Activated CD4-positive, alpha-beta memory T cell treated with anti-CD3 and anti-CD28 coated beads for 36 hours (primary cell): ENCODE measurements at regions of chr5 and their contacts with region 1.

Region 1: DNA sequence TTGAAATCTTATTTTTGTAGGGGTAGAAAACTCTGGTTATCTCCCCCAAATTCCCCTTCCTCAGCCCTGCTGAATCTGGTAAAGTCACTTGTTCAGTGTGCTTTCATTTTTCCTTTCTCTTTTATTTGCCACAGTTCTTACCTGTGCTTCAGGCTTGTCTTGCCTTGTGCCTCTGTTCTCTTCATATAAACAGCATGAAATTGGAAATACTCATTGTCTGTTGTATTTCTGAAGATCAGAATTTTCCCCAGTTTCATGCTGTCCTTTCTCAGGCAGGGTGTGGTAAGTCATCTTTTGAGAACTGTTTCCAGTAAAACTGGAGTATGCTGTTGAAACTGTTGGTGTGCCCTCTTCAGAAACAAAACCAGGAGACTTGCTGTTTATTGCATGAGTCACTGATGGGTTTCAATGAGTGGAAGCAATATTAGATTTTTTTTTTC is 7.0 kb downstream of the PAM start:
- DNase-seq: no peak
- H3K4me3 Mint-ChIP-seq: peak overlapping the region; percentile 51
- H3K27ac Mint-ChIP-seq: peak overlapping the region; percentile 75
- H3K4me1 Mint-ChIP-seq: peaks cover 76% of the 10 kb centered on the region
- H3K27me3 Mint-ChIP-seq: no peaks in the 10 kb centered on the region

Region 2: GRCh38 chr5:102747386-102748166 is 14.5 kb before region 1 on chr5:
- CTCF ChIA-PET with region 1: interaction called, 4 read pairs
- POLR2A ChIA-PET with region 1: interaction called, 4 read pairs
- intact Hi-C with region 1: loop called (anchors 1 kb)
- DNase-seq: no peak
- H3K4me3 Mint-ChIP-seq: no peak overlapping the region
- H3K27ac Mint-ChIP-seq: no peak overlapping the region
- H3K4me1 Mint-ChIP-seq: peaks cover 13% of the 10 kb centered on the region
- H3K27me3 Mint-ChIP-seq: no peaks in the 10 kb centered on the region

Region 3: DNA sequence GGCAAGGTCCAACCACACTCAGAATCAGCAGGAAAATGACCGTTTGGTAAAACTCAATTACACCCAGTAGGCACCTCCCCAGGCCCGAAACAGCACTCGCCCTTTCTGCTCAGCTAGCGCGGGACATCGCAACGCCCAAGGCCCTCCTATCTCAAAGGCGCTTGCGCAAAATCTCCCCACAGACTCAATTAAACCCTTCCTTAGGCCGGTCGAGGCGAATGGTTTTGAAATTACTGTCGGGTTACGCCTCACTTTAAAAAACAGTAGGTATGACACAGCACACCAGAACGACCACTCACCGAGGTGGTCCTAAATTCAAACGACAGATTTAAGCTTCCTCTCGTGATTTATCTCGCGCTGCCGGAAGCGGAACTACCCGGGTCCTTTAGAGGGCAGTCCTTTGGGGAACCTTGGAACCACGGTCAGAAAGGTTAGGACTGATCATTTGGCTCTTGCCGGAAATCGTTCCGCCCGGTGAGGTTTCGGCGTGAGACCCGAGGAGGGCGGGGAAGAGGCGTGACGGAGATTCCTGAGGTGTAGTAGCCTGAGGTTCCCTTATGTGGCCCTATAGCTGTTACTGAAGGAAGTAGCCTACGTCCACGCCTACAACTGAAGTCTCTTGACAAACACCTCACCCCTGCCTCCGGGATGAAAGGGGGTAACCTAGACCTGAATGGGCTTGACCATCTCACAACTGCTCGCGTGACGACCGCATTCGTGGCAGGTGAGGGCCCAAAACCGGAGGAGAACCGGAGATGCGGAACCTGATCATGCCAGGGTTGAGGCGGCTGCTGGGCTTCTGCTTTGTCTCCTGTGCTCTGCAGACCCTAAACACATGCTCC is 357.9 kb after region 1 on chr5 and contains the starts of genes GIN1 and PPIP5K2:
- CTCF ChIA-PET with region 1: no interaction called
- POLR2A ChIA-PET with region 1: interaction called, 26 read pairs
- intact Hi-C with region 1: loop called (anchors 1 kb)
- DNase-seq: peak; percentile 99
- H3K4me3 Mint-ChIP-seq: peak within 1 kb of the TSS; percentile 88
- H3K27ac Mint-ChIP-seq: peak within 1 kb of the TSS; percentile 99
- H3K4me1 Mint-ChIP-seq: peaks cover 40% of the 10 kb centered on the region
- H3K27me3 Mint-ChIP-seq: no peaks in the 10 kb centered on the region
- total RNA-seq, gene GIN1: 9.7 to 10.7 TPM
- total RNA-seq, gene PPIP5K2: 40.6 to 44.4 TPM